OCI-LY7 (cell line): ENCODE measurements at regions of chr2 and their contacts with region 1.

Region 1: DNA sequence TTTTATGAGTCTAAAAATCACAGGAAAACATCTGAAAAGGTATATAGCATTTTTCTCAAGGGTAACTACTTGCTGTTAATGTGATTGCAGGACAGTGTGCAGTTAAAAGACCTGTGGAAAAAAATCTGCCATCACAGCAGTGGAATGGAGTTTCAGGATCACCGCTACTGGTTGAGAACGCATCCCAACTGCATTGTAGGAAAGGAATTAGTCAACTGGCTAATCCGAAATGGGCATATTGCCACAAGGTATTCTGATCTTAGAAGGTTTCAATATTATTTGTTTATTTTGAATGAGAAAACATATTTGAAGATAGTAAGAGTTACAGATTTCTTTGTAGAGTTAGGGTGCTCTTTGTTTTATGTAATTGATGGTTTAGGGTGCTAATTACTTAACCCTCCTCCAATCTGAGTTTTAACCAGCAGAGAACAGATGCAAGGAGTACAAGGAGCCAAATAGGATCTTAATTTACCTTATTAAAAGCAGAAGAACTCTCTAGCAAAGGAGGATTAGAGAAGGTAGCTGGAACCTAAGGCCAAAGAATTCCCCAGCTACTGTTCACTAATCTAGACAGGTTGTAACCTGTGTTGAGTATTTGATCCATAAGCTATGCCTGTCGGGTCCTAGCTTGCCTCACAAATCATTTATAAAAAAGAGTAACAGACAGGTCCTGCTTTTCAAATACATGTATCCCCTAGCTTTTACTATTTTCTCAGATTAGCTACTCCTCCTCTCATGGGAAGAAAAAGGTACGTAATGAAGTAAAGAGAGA is 35.0 kb downstream of the PIKFYVE start:
- DNase-seq: no peak
- H3K4me3 ChIP-seq: no peak overlapping the region
- H3K27ac ChIP-seq: no peak overlapping the region
- H3K4me1 ChIP-seq: no peaks in the 10 kb centered on the region
- CTCF ChIP-seq: no peak

Region 2: GRCh38 chr2:208142240-208142924 is 158.7 kb before region 1 on chr2:
- CTCF ChIA-PET with region 1: no interaction called
- POLR2A ChIA-PET with region 1: no interaction called
- intact Hi-C with region 1: no loop called
- DNase-seq: no peak
- H3K4me3 ChIP-seq: no peak overlapping the region
- H3K27ac ChIP-seq: no peak overlapping the region
- H3K4me1 ChIP-seq: no peaks in the 10 kb centered on the region
- CTCF ChIP-seq: no peak

Region 3: DNA sequence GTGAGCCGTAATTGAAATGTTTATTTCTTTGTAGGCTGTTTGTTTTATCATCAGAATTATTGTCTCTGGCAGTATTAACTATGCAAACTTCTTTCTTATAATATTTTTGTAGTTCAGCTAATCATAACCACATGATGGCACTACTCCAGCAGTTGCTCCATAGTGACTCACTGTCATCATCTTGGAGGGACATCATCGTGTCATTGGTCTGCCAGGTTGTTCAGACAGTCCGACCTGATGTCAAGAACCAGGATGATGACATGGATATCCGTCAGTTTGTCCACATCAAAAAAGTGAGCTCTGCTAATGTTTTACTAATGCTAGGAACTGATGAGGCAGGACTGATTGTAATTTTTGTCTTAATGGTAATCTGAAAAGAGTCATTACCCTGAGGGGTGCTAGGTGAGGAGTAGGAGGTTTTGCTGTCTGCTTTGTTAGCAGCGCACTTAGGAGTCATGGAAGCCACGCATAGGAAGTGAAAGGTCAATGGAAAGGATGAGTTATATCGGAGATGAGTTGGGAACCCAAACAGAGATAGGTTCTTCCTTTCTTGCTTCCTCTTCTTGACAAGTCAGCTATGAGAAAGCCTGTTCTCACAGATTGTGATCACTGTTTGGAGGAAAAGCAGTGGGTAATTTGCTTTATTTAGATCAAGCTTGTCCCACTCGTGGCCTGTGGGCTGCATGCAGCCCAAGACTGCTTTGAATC is 14.2 kb after region 1 on chr2:
- CTCF ChIA-PET with region 1: no interaction called
- POLR2A ChIA-PET with region 1: interaction called, 13 read pairs
- intact Hi-C with region 1: no loop called
- DNase-seq: no peak
- H3K4me3 ChIP-seq: no peak overlapping the region
- H3K27ac ChIP-seq: no peak overlapping the region
- H3K4me1 ChIP-seq: peaks cover 10% of the 10 kb centered on the region
- CTCF ChIP-seq: peak; percentile 45; the same call in 1 of the 2 replicates